Esophagus muscularis mucosa (tissue), 4 donors: ENCODE measurements at regions of chr10 and their contacts with region 1.

Region 1: GRCh38 chr10:70925377-70926225 is 37.2 kb upstream of the PCBD1 start:
- DNase-seq: no peak
- H3K4me3 ChIP-seq: no peak overlapping the region
- H3K27ac ChIP-seq: no peak overlapping the region
- H3K4me1 ChIP-seq: peaks cover 0 to 6% (median 3%) of the 10 kb centered on the region in 4 donors
- H3K27me3 ChIP-seq: no peaks in the 10 kb centered on the region
- CTCF ChIP-seq: peak; percentile 87 to 99 (median 93)
- EP300 ChIP-seq: no peak
- POLR2A ChIP-seq: no peak

Region 2: GRCh38 chr10:71285180-71285545 is 359.6 kb after region 1 on chr10:
- intact Hi-C with region 1: loop called (anchors 2 kb)
- DNase-seq: no peak
- H3K4me3 ChIP-seq: no peak overlapping the region
- H3K27ac ChIP-seq: no peak overlapping the region
- H3K4me1 ChIP-seq: peaks cover 0 to 3% (median 0%) of the 10 kb centered on the region in 4 donors
- H3K27me3 ChIP-seq: no peaks in the 10 kb centered on the region
- CTCF ChIP-seq: peak; percentile 67 to 74 (median 71)
- EP300 ChIP-seq: no peak
- POLR2A ChIP-seq: no peak